ENCODE measurements at regions of chr18 and their contacts with region 1.

Region 1: DNA sequence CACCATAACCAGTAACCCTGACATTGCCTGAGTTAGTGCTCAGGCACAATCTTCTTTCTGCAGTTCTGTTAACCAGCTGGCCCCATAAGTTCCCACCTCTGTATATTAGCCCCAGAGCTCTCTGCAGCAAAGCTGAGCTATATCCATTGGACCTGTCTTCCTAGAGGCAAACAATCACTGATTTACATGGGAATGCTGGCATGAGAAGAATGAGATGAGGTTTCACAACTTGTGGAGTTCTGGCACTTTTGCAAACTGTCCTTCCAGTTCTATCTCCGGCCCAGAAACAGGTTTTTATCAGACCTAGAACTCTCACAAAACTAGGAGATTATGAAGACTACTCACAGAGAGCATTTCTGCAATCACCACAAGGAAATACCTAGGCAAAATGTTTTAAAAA is 7.9 kb upstream of the CCBE1 start:
- DNase-seq: no peak
- ATAC-seq: no peak
- H3K4me3 ChIP-seq: no peak overlapping the region
- H3K27ac ChIP-seq: no peak overlapping the region
- H3K4me1 ChIP-seq: no peaks in the 10 kb centered on the region
- CTCF ChIP-seq: no peak
- EP300 ChIP-seq: no peak
- POLR2A ChIP-seq: no peak
- RAD21 ChIP-seq: no peak

Region 2: DNA sequence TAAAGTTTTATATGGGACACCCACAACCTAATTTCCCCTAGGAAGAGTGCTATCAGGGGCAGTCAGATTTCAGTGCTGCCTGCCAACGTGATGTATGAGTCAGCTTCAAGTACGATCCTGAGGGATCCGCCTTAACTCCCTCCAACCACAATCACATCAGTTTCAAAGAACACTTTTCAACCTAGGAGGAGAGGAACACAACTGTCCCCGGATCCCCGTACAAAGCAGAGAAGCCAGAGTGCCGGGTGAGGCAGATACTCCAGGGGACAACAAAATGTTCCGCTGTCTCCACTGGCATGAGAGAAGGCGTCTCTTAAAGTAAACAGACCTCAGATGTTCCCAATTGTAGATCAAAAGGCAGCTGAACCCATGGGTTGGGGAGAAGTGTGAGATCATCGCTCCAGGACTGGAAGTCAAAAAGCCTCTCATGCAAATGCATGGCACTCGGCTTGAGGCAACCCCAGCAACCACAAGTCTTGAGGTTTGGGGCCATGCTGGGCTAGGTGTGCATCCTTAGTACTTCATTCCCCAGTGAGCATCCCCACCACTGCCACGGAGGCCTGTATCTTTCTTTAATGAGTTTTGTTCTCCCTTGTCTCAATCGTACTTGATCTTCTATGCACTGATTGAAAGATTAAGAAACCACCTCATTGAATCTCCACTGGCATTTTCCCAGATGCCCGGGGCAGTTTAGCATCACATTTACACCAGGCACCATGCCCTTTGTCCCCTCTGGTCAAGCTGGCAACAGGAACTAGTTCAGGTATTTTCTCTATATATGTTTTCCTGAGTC is 83.0 kb after region 1 on chr18:
- CTCF ChIA-PET with region 1: no interaction called
- POLR2A ChIA-PET with region 1: interaction called, 11 read pairs
- DNase-seq: peak; percentile 10 to 27
- ATAC-seq: peak; percentile 77 to 84; a peak in 5 of 6 replicates
- H3K4me3 ChIP-seq: no peak overlapping the region
- H3K27ac ChIP-seq: peak overlapping the region; percentile 48 to 75; a peak in 5 of 6 replicates
- H3K4me1 ChIP-seq: peaks cover 13% of the 10 kb centered on the region; the same call in 1 of the 3 replicates
- CTCF ChIP-seq: no peak
- EP300 ChIP-seq: no peak
- POLR2A ChIP-seq: no peak
- RAD21 ChIP-seq: no peak

Region 3: GRCh38 chr18:59846814-59847490 is 141.8 kb after region 1 on chr18:
- CTCF ChIA-PET with region 1: no interaction called
- POLR2A ChIA-PET with region 1: no interaction called
- DNase-seq: peak in 1 of 2 experiments; percentile 18
- ATAC-seq: peak in 1 of 2 experiments; percentile 39; a peak in 2 of 6 replicates
- H3K4me3 ChIP-seq: no peak overlapping the region
- H3K27ac ChIP-seq: no peak overlapping the region
- H3K4me1 ChIP-seq: no peaks in the 10 kb centered on the region; the same call in 2 of the 3 replicates
- CTCF ChIP-seq: no peak
- EP300 ChIP-seq: no peak
- POLR2A ChIP-seq: no peak
- RAD21 ChIP-seq: no peak

Measured in A549 (cell line).